ENCODE measurements at regions of chr10 and their contacts with region 1.

Region 1: DNA sequence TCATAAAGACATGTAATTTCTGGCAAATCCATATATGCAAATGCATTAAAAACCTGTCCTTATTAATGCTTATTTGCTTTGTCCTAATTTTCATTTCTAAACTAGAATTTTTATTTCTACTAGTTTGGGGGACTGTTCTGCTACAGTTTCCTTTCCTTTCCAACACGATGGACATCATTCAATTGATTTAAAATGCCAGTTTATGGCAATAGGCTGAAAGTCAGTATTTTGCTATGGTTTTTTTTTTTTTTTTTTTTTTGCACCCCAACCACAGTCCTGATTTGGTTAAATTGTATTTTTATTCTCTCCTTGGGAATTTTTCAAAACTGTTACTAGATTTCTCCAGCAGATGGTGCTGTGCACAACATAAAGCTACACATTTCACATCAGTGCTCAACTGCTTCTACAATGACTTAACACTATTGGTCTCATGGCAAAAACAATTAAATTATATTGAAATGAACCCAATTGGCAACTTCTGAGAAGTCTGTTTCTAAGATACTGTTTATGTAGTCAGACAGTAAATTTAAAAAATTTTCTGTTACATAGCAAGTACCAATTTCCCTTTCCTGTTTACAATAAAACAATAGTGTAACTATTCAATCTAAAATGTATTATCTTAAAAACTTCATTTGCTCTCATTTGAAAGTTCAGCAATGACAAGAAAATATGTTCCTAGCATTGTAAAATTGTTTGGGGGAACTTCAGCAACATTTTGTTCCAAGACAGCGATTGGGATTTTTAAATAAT is 193.8 kb upstream of the CCDC6 start:
- DNase-seq: no peak
- ATAC-seq: peak; percentile 35 to 65 (median 54)
- H3K4me3 ChIP-seq: no peak overlapping the region
- H3K27ac ChIP-seq: no peak overlapping the region
- H3K4me1 ChIP-seq: peaks cover 0 to 9% (median 0%) of the 10 kb centered on the region in 12 donors
- H3K27me3 ChIP-seq: no peaks in the 10 kb centered on the region
- CTCF ChIP-seq: peak; percentile 40 to 74 (median 57)
- POLR2A ChIP-seq: no peak

Region 2: DNA sequence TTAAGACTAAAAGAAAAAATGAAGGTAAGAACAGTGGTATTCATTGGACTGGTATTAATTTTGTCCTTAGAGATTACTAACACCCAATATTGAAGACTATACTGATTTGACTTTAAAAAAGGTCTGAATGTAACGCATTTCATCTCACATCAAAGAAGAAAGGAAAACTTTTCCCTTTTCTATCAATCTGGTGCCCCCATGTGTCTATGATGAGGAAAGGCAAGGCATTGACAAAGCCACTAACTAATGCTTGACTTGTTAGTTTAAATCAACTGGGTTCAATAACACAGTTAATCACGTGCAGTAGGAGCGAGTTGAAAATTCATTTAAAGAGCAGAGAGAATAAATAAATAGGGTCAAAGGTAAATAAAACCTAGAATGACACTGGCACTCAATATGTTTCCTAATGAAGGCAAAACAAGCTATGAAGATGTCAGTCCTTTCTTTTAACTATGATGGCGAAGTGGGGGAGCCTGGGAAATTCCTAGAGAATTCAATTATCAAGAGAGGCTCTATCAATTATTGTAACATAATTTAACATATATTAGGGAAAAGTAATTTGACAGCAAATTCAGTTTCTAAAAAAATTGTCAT is 108.6 kb after region 1 on chr10:
- intact Hi-C with region 1: loop called in 8 of 10 experiments (anchors 2 to 10 kb)
- DNase-seq: no peak
- ATAC-seq: peak in 2 of 4 donors; percentile 27 to 53
- H3K4me3 ChIP-seq: no peak overlapping the region
- H3K27ac ChIP-seq: no peak overlapping the region
- H3K4me1 ChIP-seq: peaks cover 0 to 11% (median 5%) of the 10 kb centered on the region in 12 donors
- H3K27me3 ChIP-seq: no peaks in the 10 kb centered on the region
- CTCF ChIP-seq: peak; percentile 28 to 75 (median 58)
- POLR2A ChIP-seq: no peak

Region 3: DNA sequence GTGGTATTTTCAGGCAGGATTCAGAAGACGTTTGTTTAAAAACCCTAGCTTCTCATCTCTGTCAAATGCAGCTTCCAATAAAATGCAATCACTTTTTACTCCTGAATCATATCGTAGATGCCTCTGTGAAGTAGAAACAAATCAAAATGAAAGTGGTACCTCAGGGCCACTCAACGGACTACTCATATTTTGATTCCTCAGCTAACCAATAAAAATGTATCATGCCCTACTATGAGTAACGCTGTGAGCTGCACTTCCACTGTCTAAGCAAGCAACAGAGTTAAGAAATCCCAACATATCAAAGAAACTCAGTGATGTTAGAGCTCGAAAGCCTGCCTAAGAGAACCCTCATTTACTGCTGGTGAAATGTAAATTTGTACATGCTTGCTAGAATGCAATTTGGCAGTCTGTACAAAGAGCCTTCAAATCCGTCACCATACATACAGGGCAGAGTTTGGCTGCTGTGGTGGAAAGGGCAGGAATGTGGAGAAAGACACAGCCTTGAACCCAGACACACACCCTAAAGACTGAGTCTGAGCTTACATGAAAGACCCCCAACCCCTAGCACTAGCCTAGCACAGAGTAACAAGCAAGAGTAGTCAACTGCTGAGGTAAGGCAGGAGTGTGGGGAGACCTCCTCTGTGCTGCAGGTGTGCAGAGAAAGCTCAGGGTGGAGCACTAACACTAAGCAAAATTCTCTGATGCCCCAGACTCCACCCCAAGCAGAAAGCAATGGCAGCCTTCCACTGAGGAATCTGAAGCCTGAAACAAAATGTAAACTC is 138.0 kb after region 1 on chr10:
- intact Hi-C with region 1: no loop called
- DNase-seq: peak in 3 of 5 donors; percentile 10 to 35 (median 23)
- ATAC-seq: peak; percentile 66 to 83 (median 78)
- H3K4me3 ChIP-seq: peak overlapping the region in 2 of 12 donors; percentile 17 to 27
- H3K27ac ChIP-seq: peak overlapping the region in 10 of 12 donors; percentile 14 to 84 (median 72)
- H3K4me1 ChIP-seq: peaks cover 0 to 36% (median 24%) of the 10 kb centered on the region in 12 donors
- H3K27me3 ChIP-seq: no peaks in the 10 kb centered on the region
- CTCF ChIP-seq: peak in 9 of 12 donors; percentile 15 to 46 (median 27)
- POLR2A ChIP-seq: no peak

Region 4: DNA sequence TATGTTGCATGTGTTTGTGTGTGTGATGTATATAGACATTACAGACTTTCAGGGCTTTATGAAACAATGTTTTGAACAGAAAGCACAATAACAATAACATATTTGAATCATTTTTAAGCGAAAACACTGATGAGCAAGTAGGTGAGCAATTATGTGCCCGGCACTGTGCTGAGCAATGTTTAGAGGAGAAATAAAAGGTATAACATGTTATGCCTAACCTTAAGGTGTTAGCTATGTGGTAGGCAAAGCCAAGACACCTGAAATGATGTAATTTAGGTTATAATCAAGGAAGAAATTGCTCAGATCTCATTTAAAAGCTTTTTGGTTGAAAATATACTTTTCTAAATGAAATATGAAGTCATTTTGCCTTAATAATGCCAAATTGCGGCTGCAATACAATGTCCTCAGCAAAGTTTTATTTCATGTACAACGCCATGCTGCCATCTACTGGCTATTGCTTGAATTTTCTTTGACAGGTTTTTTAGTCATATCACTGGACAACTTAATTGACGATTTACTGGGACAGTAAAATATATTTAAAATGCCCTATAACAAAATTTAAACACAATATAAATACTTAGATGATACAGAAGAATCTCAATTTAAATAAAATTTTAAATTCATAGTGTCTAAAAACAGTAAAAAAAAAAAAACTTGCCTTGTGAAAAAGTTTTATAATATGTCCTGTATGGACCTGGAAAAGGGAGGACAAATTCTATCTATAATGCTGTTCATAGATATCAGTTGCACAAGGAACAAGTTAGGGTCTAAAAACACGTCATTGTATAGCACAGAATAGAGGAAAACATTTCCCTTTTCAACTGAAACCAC is 547.0 kb after region 1 on chr10:
- intact Hi-C with region 1: loop called in 7 of 10 experiments (anchors 2 to 10 kb)
- DNase-seq: peak in 1 of 5 donors; percentile 10
- ATAC-seq: peak in 1 of 4 donors; percentile 53
- H3K4me3 ChIP-seq: no peak overlapping the region
- H3K27ac ChIP-seq: no peak overlapping the region
- H3K4me1 ChIP-seq: peaks cover 0 to 3% (median 0%) of the 10 kb centered on the region in 12 donors
- H3K27me3 ChIP-seq: no peaks in the 10 kb centered on the region
- CTCF ChIP-seq: peak; percentile 64 to 83 (median 76)
- POLR2A ChIP-seq: no peak

Region 5: DNA sequence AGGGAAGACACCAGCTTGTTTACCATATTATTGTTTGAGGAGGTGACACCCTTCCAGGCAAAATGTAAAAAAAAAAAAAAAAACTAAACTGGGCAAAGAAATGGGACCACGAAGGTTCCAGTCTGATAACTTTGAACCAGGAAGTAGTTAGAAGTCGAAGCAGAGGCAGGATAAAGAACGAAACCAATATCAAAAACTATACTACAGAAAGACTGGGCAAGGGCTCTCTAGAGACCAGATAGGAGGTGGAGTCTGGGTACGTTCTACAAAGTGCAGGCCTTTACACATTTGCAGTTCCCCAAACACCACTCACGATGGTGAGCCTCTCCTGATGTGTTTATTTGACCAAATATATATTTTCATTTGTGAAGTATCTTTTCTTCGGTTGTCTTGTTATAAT is 552.5 kb after region 1 on chr10:
- intact Hi-C with region 1: loop called in 7 of 10 experiments (anchors 2 to 10 kb)
- DNase-seq: no peak
- ATAC-seq: no peak
- H3K4me3 ChIP-seq: no peak overlapping the region
- H3K27ac ChIP-seq: no peak overlapping the region
- H3K4me1 ChIP-seq: no peaks in the 10 kb centered on the region
- H3K27me3 ChIP-seq: no peaks in the 10 kb centered on the region
- CTCF ChIP-seq: no peak
- POLR2A ChIP-seq: no peak